ENCODE measurements at regions of chr6 and their contacts with region 1.

Region 1: DNA sequence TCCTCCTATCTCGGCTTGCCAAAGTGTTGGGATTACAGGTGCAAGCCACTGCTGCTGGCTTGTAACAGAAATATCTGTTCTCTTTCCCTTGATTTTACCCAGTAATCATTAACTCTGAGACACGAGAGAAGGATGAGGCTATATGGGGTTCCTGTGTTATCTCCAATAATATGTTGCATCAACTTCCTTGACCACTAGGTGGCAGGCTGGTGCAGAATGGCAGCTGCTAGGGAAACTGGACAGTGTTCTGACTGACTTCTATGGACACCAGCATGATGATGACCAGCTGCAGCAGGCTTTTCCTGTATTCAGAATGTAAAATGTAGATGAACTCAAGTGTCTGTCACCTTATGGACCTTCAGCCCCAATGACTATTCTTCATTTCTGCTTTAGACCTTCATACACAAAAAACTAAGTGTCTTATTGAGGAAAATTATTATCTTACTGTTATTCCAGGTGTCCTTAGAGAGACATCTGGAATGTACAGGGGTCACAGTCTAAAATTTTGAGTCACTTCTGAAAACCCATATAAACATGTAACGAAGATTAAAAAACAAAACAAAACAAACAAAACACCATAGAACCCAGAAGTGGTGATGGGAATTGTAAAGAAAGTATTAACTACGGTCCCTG is 20.4 kb upstream of the CD109 start:
- DNase-seq: peak; percentile 77
- ATAC-seq: peak; percentile 88
- H3K4me3 Mint-ChIP-seq: no peak overlapping the region
- H3K27ac Mint-ChIP-seq: no peak overlapping the region
- H3K4me1 Mint-ChIP-seq: peaks cover 2% of the 10 kb centered on the region
- H3K27me3 Mint-ChIP-seq: peaks cover 37% of the 10 kb centered on the region

Region 2: DNA sequence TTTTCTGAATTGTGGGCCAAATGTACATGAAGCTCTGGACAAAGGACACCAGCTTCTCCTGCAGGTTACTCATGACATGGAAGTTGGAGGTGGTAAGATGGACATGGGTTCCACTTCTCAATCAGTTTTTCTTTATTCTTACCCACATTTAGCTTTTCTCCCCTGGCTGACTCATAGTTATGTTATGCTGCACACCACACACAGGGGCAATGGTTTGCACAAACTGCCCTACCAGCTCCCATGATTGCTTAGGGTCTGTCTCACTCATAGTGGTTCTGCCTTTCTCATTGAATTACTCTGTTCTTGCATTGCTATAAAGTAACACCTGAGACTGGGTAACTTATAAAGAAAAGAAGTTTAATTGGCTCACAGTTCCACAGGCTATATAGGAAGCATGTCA is 15.9 kb after region 1 on chr6:
- CTCF ChIA-PET with region 1: interaction called, 10 read pairs
- DNase-seq: no peak
- ATAC-seq: no peak
- H3K4me3 Mint-ChIP-seq: no peak overlapping the region
- H3K27ac Mint-ChIP-seq: no peak overlapping the region
- H3K4me1 Mint-ChIP-seq: peaks cover 13% of the 10 kb centered on the region
- H3K27me3 Mint-ChIP-seq: peaks cover 42% of the 10 kb centered on the region